GM10248 (cell line): ENCODE measurements at regions of chr6 and their contacts with region 1.

Region 1: GRCh38 chr6:134822920-134823709 is 126.8 kb downstream of the ALDH8A1 start:
- DNase-seq: peak; percentile 65
- CTCF ChIP-seq: peak; percentile 70

Region 2: GRCh38 chr6:134161036-134161435 is 662.1 kb before region 1 on chr6:
- CTCF ChIA-PET with region 1: interaction called, 26 read pairs
- POLR2A ChIA-PET with region 1: no interaction called
- DNase-seq: no peak
- CTCF ChIP-seq: no peak

Region 3: GRCh38 chr6:134174672-134175198 is 648.4 kb before region 1 on chr6:
- CTCF ChIA-PET with region 1: interaction called, 16 read pairs
- POLR2A ChIA-PET with region 1: no interaction called
- DNase-seq: peak; percentile 92
- CTCF ChIP-seq: no peak

Region 4: DNA sequence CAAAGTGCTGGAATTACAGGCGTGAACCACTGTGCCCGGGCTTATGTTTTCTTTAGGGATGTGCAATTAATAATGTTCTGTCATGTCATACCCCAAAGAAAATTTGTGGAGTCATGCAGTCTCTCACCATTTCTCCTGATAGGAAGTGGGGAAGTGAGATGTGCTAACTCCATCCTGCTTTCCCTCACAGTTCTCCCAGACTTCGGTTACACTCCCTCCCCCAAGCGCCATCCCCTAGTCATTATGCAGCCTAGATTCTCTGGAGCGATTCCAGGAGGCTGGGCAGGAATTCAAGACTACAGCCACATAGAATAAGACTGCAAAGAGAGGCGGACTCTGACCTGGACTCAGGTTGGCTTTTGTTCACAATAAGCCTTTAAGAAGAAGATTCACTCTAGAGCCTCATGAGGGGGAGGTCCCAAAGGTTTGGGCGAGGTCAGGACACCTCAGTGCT is 144.7 kb before region 1 on chr6:
- CTCF ChIA-PET with region 1: no interaction called
- POLR2A ChIA-PET with region 1: no interaction called
- DNase-seq: no peak
- CTCF ChIP-seq: no peak

Region 5: DNA sequence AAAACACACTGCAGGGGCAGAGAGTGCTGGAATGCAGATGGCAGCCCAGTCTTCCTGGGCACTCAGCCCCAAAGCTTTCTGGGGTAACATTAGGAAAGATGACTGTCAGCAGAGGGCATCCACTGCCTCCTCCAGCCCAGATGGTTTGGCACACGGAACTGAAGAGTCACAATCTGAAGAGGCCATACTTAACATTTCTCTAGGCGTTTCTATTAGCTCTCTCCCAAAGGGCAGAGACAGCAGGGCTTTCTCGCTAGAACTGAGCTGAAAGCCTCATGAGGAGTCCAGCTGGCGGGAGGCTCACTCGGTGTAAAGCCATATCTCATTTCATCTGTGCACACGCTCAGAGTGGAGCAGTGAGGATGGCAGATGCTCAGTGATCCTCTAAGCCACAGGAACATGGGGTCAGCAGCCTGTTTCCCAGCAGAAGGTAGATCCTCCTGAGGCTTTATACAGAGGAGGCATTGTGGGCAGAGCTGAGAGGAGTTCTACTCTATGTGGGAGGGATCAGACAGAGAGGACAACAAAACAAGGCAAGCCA is 98.7 kb after region 1 on chr6:
- CTCF ChIA-PET with region 1: no interaction called
- POLR2A ChIA-PET with region 1: no interaction called
- DNase-seq: no peak
- CTCF ChIP-seq: no peak